OCI-LY7 (cell line): ENCODE measurements at regions of chrX and their contacts with region 1.

Region 1: DNA sequence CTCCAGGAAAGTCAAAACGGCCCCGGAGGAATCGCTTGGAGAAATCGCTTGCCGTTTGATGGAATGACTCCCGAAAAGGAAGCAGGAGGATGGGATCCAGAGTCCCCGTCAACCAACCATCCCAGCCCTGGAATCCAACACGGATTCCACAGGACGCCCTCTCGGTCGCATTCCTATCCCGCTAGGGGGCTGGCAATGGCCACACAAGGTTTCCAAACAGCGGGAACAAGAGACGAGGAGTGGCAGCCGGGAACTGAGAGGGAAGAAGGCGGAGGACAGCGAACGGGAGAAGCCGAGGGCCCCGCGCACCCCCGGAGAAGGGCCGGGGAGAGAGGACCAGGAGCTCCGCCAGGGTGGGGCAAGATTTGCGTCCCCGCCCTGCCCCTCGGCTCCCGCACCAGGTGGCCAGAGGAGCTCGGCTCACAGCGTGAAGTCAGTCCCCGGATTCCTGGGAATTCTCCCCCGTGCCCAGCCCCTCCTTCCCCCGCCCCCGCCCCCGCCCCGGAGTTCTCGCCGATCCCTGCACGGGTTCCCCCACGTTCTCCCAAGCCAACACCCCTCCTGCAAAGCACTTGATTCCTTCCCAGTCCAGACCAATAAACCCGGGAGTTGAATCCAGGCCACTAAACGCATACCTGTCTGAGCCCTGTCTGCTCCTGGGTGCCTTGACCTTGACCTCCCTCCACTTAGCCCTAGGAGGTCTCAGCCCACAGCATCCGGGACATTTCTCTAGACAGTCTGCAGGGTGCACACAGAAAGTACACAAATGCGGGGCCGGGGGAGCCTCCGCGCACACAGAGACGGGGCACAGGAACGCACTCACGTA is 1.4 kb downstream of the PDZD4 start:
- DNase-seq: no peak
- H3K4me3 ChIP-seq: no peak overlapping the region
- H3K27ac ChIP-seq: no peak overlapping the region
- H3K4me1 ChIP-seq: no peaks in the 10 kb centered on the region
- CTCF ChIP-seq: no peak

Region 2: GRCh38 chrX:153885968-153886903 is 57.3 kb after region 1 on chrX and contains the start of gene L1CAM:
- CTCF ChIA-PET with region 1: no interaction called
- POLR2A ChIA-PET with region 1: no interaction called
- intact Hi-C with region 1: loop called (anchors 10 kb)
- DNase-seq: no peak
- H3K4me3 ChIP-seq: no peak within 1 kb of the TSS
- H3K27ac ChIP-seq: no peak within 1 kb of the TSS
- H3K4me1 ChIP-seq: no peaks in the 10 kb centered on the region
- CTCF ChIP-seq: no peak
- total RNA-seq, gene L1CAM: not detected in 2 replicates

Region 3: DNA sequence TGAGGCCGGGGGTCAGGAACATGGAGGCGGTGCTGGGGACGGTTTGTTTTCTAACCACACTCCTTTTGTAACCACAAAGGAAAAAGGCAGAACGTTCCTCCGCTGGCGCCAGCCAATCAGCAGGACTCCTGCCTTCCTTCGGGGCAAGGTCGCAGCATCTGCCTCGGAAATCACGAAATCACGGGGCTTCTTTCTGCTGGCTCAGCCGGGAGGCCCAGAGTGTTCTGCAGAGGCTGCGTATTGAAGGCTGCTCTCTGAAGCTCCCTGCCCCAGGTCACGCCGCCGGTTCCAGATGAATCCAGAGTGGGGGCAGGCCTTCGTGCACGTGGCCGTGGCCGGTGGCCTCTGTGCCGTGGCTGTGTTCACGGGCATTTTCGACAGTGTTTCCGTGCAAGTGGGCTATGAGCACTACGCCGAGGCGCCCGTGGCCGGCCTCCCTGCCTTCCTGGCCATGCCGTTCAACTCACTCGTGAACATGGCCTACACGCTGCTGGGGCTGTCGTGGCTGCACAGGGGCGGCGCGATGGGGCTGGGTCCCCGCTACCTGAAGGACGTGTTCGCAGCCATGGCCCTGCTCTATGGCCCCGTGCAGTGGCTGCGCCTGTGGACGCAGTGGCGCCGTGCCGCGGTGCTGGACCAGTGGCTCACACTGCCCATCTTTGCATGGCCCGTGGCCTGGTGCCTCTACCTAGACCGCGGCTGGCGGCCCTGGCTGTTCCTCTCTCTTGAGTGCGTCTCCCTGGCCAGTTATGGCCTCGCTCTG is 153.0 kb after region 1 on chrX:
- CTCF ChIA-PET with region 1: no interaction called
- POLR2A ChIA-PET with region 1: no interaction called
- intact Hi-C with region 1: no loop called
- DNase-seq: no peak
- H3K4me3 ChIP-seq: no peak overlapping the region
- H3K27ac ChIP-seq: no peak overlapping the region
- H3K4me1 ChIP-seq: peaks cover 11% of the 10 kb centered on the region
- CTCF ChIP-seq: no peak